CD4-positive, alpha-beta T cell (primary cell): ENCODE measurements at regions of chr13 and their contacts with region 1.

Region 1: GRCh38 chr13:31424117-31424729 is 224.4 kb downstream of the B3GLCT start:
- DNase-seq: peak; percentile 5 to 62 (median 30)
- ATAC-seq: peak; percentile 48
- H3K4me3 ChIP-seq: no peak overlapping the region
- H3K4me3 Mint-ChIP-seq: no peak overlapping the region
- H3K27ac ChIP-seq: no peak overlapping the region
- H3K27ac Mint-ChIP-seq: no peak overlapping the region
- H3K4me1 ChIP-seq: peaks cover 4% of the 10 kb centered on the region
- H3K4me1 Mint-ChIP-seq: no peaks in the 10 kb centered on the region
- H3K27me3 ChIP-seq: no peaks in the 10 kb centered on the region
- H3K27me3 Mint-ChIP-seq: peaks cover 32% of the 10 kb centered on the region
- CTCF ChIP-seq: peak; percentile 68

Region 2: GRCh38 chr13:31199849-31200636 is 224.2 kb before region 1 on chr13 and contains the start of gene B3GLCT:
- CTCF ChIA-PET with region 1: no interaction called
- POLR2A ChIA-PET with region 1: no interaction called
- intact Hi-C with region 1: loop called in 1 of 2 experiments (anchors 5 kb)
- DNase-seq: peak; percentile 59 to 93 (median 78)
- ATAC-seq: peak; percentile 76
- H3K4me3 ChIP-seq: peak within 1 kb of the TSS; percentile 66
- H3K4me3 Mint-ChIP-seq: peak within 1 kb of the TSS; percentile 99
- H3K27ac ChIP-seq: peak within 1 kb of the TSS; percentile 78 to 83
- H3K27ac Mint-ChIP-seq: peak within 1 kb of the TSS; percentile 95
- H3K4me1 ChIP-seq: peaks cover 16% of the 10 kb centered on the region
- H3K4me1 Mint-ChIP-seq: peaks cover 17% of the 10 kb centered on the region
- H3K27me3 ChIP-seq: no peaks in the 10 kb centered on the region
- H3K27me3 Mint-ChIP-seq: peaks cover 3% of the 10 kb centered on the region
- CTCF ChIP-seq: peak; percentile 75
- total RNA-seq, gene B3GLCT: 3.2 to 3.7 TPM

Region 3: GRCh38 chr13:31380715-31381114 is 43.5 kb before region 1 on chr13:
- CTCF ChIA-PET with region 1: no interaction called
- POLR2A ChIA-PET with region 1: no interaction called
- intact Hi-C with region 1: no loop called
- DNase-seq: no peak
- ATAC-seq: no peak
- H3K4me3 ChIP-seq: no peak overlapping the region
- H3K4me3 Mint-ChIP-seq: no peak overlapping the region
- H3K27ac ChIP-seq: no peak overlapping the region
- H3K27ac Mint-ChIP-seq: no peak overlapping the region
- H3K4me1 ChIP-seq: no peaks in the 10 kb centered on the region
- H3K4me1 Mint-ChIP-seq: no peaks in the 10 kb centered on the region
- H3K27me3 ChIP-seq: no peaks in the 10 kb centered on the region
- H3K27me3 Mint-ChIP-seq: peaks cover 30% of the 10 kb centered on the region
- CTCF ChIP-seq: no peak

Region 4: GRCh38 chr13:31468114-31468902 is 44.1 kb after region 1 on chr13:
- CTCF ChIA-PET with region 1: no interaction called
- POLR2A ChIA-PET with region 1: no interaction called
- intact Hi-C with region 1: no loop called
- DNase-seq: no peak
- ATAC-seq: no peak
- H3K4me3 ChIP-seq: no peak overlapping the region
- H3K4me3 Mint-ChIP-seq: no peak overlapping the region
- H3K27ac ChIP-seq: no peak overlapping the region
- H3K27ac Mint-ChIP-seq: no peak overlapping the region
- H3K4me1 ChIP-seq: no peaks in the 10 kb centered on the region
- H3K4me1 Mint-ChIP-seq: no peaks in the 10 kb centered on the region
- H3K27me3 ChIP-seq: no peaks in the 10 kb centered on the region
- H3K27me3 Mint-ChIP-seq: no peaks in the 10 kb centered on the region
- CTCF ChIP-seq: no peak